CD8-positive, alpha-beta T cell (primary cell): ENCODE measurements at regions of chr15 and their contacts with region 1.

Region 1: GRCh38 chr15:68304589-68305337 is 27.2 kb downstream of the FEM1B start:
- DNase-seq: peak in 1 of 9 experiments; percentile 6
- ATAC-seq: no peak
- H3K4me3 ChIP-seq: no peak overlapping the region
- H3K4me3 Mint-ChIP-seq: no peak overlapping the region
- H3K27ac ChIP-seq: no peak overlapping the region
- H3K27ac Mint-ChIP-seq: no peak overlapping the region
- H3K4me1 ChIP-seq: peaks cover 14% of the 10 kb centered on the region
- H3K4me1 Mint-ChIP-seq: peaks cover 21% of the 10 kb centered on the region
- H3K27me3 ChIP-seq: peaks cover 0 to 5% of the 10 kb centered on the region in 2 experiments
- H3K27me3 Mint-ChIP-seq: peaks cover 4% of the 10 kb centered on the region
- CTCF ChIP-seq: no peak

Region 2: GRCh38 chr15:68252925-68253534 is 51.7 kb before region 1 on chr15:
- CTCF ChIA-PET with region 1: interaction called, 43 read pairs
- POLR2A ChIA-PET with region 1: interaction called, 6 read pairs
- intact Hi-C with region 1: loop called (anchors 1 kb)
- DNase-seq: peak in 6 of 9 experiments; percentile 9 to 74 (median 38)
- ATAC-seq: peak; percentile 80
- H3K4me3 ChIP-seq: no peak overlapping the region
- H3K4me3 Mint-ChIP-seq: no peak overlapping the region
- H3K27ac ChIP-seq: no peak overlapping the region
- H3K27ac Mint-ChIP-seq: no peak overlapping the region
- H3K4me1 ChIP-seq: no peaks in the 10 kb centered on the region
- H3K4me1 Mint-ChIP-seq: peaks cover 8% of the 10 kb centered on the region
- H3K27me3 ChIP-seq: peaks cover 0 to 2% of the 10 kb centered on the region in 2 experiments
- H3K27me3 Mint-ChIP-seq: peaks cover 6% of the 10 kb centered on the region
- CTCF ChIP-seq: peak; percentile 95

Region 3: DNA sequence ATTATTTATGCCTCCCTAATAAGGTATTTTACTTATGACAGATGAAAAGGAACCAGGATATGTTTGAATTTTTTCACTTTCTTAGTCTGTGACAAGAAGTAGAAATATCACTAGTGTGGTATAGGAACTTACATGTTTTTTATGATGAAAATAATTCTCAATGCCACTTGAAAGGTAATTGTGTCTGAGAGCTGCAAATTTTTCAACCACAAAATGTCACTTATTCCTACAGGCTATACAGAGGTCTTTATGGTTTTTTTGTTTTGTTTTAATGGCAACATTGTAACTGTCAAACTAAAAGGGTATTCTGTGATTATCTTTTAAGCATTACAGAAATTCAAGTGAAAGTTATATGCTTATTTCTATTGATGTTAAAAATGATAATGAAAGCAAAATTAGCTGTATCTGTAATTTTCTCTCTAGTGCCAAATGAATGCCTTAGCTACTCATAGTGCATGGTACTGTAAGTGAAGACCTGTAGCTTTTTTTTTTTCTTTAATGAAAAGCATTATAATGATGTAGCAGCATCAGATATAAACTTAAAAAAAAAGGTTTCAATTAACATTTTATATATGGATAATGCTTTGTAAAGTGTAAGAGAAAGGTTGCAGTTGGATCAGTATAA is 12.5 kb before region 1 on chr15:
- CTCF ChIA-PET with region 1: interaction called, 22 read pairs
- POLR2A ChIA-PET with region 1: no interaction called
- intact Hi-C with region 1: no loop called
- DNase-seq: peak in 1 of 9 experiments; percentile 29
- ATAC-seq: peak; percentile 48
- H3K4me3 ChIP-seq: no peak overlapping the region
- H3K4me3 Mint-ChIP-seq: no peak overlapping the region
- H3K27ac ChIP-seq: no peak overlapping the region
- H3K27ac Mint-ChIP-seq: peak overlapping the region; percentile 33
- H3K4me1 ChIP-seq: peaks cover 20% of the 10 kb centered on the region
- H3K4me1 Mint-ChIP-seq: peaks cover 67% of the 10 kb centered on the region
- H3K27me3 ChIP-seq: no peaks in the 10 kb centered on the region
- H3K27me3 Mint-ChIP-seq: no peaks in the 10 kb centered on the region
- CTCF ChIP-seq: no peak

Region 4: DNA sequence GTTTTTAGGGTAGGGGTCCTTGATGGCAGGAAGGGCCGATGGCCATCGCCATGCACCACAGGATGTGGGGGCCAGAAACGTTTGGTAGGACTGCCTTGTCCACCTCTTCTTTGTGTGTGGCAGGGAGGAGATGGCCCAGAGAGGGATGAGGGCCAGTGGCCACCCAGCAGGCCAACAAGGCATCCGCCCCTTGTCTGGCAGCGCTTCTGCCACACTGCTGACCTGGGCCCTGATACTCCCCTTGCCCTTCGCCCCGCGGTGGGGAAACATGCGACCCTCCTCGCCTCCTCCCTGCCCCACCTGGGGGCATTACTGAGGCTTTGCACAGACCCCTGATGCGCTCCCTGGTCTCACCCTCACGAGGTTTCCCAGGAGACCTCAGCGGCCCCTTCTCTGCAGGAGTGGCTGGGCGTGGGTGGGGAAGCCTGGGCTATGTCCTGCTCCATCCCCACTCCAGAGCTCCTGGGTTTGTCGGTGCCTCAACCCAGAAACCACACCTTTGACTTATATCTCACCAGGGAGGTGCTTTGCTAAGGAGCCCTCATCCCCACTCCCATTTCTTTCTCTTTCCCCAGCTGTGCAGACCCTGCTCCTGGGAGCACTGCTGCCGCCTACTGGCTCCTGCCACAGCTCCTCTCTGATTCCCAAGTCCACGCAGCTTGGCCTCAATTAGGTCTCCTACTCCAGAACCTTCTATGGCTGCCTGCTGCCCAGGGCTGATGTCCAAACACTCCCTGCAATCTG is 11.5 kb after region 1 on chr15:
- CTCF ChIA-PET with region 1: interaction called, 23 read pairs
- POLR2A ChIA-PET with region 1: no interaction called
- intact Hi-C with region 1: no loop called
- DNase-seq: no peak
- ATAC-seq: no peak
- H3K4me3 ChIP-seq: no peak overlapping the region
- H3K4me3 Mint-ChIP-seq: no peak overlapping the region
- H3K27ac ChIP-seq: no peak overlapping the region
- H3K27ac Mint-ChIP-seq: no peak overlapping the region
- H3K4me1 ChIP-seq: no peaks in the 10 kb centered on the region
- H3K4me1 Mint-ChIP-seq: no peaks in the 10 kb centered on the region
- H3K27me3 ChIP-seq: no peaks in the 10 kb centered on the region
- H3K27me3 Mint-ChIP-seq: peaks cover 3% of the 10 kb centered on the region
- CTCF ChIP-seq: no peak

Region 5: GRCh38 chr15:68322796-68323195 is 18.0 kb after region 1 on chr15:
- CTCF ChIA-PET with region 1: interaction called, 10 read pairs
- POLR2A ChIA-PET with region 1: no interaction called
- intact Hi-C with region 1: no loop called
- DNase-seq: no peak
- ATAC-seq: no peak
- H3K4me3 ChIP-seq: no peak overlapping the region
- H3K4me3 Mint-ChIP-seq: no peak overlapping the region
- H3K27ac ChIP-seq: no peak overlapping the region
- H3K27ac Mint-ChIP-seq: no peak overlapping the region
- H3K4me1 ChIP-seq: peaks cover 17% of the 10 kb centered on the region
- H3K4me1 Mint-ChIP-seq: peaks cover 18% of the 10 kb centered on the region
- H3K27me3 ChIP-seq: no peaks in the 10 kb centered on the region
- H3K27me3 Mint-ChIP-seq: no peaks in the 10 kb centered on the region
- CTCF ChIP-seq: no peak

Region 6: DNA sequence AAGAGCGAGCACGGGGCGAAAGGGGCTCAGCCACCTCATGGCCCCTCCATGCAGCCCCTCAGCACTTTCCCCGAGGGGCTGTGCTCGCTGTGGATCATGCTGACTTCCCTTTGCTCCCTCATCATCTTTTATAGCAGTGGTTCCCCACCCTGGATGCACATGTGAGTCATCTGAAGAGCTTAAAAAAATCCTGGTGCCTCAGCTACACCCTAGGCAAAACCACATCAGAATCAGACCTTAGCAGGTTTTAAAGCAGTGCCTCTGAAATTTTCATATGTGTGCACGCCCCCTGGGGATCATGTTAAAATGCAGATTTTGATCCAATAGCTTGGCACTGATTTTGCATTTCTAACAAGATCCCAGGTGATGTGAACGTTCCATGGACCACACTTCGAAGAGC is 23.7 kb after region 1 on chr15:
- CTCF ChIA-PET with region 1: interaction called, 10 read pairs
- POLR2A ChIA-PET with region 1: interaction called, 3 read pairs
- intact Hi-C with region 1: loop called in 1 of 2 experiments (anchors 1 kb)
- DNase-seq: peak in 3 of 9 experiments; percentile 32 to 61 (median 53)
- ATAC-seq: peak; percentile 66
- H3K4me3 ChIP-seq: no peak overlapping the region
- H3K4me3 Mint-ChIP-seq: no peak overlapping the region
- H3K27ac ChIP-seq: no peak overlapping the region
- H3K27ac Mint-ChIP-seq: no peak overlapping the region
- H3K4me1 ChIP-seq: peaks cover 29% of the 10 kb centered on the region
- H3K4me1 Mint-ChIP-seq: peaks cover 33% of the 10 kb centered on the region
- H3K27me3 ChIP-seq: no peaks in the 10 kb centered on the region
- H3K27me3 Mint-ChIP-seq: no peaks in the 10 kb centered on the region
- CTCF ChIP-seq: no peak

Region 7: GRCh38 chr15:68383161-68384074 is 78.7 kb after region 1 on chr15:
- CTCF ChIA-PET with region 1: interaction called, 23 read pairs
- POLR2A ChIA-PET with region 1: no interaction called
- intact Hi-C with region 1: loop called in 1 of 2 experiments (anchors 1 kb)
- DNase-seq: peak in 7 of 9 experiments; percentile 11 to 69 (median 43)
- ATAC-seq: peak; percentile 63
- H3K4me3 ChIP-seq: no peak overlapping the region
- H3K4me3 Mint-ChIP-seq: no peak overlapping the region
- H3K27ac ChIP-seq: no peak overlapping the region
- H3K27ac Mint-ChIP-seq: no peak overlapping the region
- H3K4me1 ChIP-seq: peaks cover 13% of the 10 kb centered on the region
- H3K4me1 Mint-ChIP-seq: peaks cover 16% of the 10 kb centered on the region
- H3K27me3 ChIP-seq: no peaks in the 10 kb centered on the region
- H3K27me3 Mint-ChIP-seq: peaks cover 3% of the 10 kb centered on the region
- CTCF ChIP-seq: peak; percentile 73